Activated CD4-positive, alpha-beta memory T cell treated with anti-CD3 and anti-CD28 coated beads, Interleukin-2, amount 10 ng/mL, durations not matched to agents 7 days and 5 days (primary cell): ENCODE measurements at regions of chr20 and their contacts with region 1.

Region 1: DNA sequence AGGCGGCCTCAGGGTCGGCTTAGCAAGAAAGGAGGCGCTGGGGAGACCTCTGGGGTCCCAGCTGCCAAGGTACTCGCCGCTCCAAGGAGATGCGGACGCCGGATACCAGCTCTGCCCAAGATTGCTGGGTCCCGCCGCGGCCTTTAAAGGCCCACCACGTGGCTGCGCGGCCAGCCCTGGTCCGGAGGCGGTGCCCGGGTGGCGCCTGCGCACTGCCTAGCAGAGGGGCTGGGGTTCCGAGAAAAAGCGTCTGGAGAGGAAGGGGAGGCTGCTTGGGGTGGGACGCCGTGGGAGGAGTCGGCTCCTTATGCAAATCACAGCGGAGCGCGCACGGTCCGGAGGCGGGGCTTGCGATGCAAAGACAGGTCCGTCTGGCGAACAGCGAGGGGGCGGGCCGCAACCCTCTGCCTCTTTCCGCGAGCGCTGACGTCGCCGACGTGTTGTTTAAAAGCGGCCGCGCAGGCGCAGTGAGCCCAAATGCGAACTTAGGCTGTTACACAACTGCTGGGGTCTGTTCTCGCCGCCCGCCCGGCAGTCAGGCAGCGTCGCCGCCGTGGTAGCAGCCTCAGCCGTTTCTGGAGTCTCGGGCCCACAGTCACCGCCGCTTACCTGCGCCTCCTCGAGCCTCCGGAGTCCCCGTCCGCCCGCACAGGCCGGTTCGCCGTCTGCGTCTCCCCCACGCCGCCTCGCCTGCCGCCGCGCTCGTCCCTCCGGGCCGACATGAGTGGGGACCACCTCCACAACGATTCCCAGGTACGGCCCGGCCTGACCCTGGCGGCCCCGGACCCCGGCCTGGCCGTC is at the start of gene TOP1:
- DNase-seq: peak; percentile 100
- H3K4me3 Mint-ChIP-seq: peak within 1 kb of the TSS; percentile 88
- H3K27ac Mint-ChIP-seq: peak within 1 kb of the TSS; percentile 91
- H3K4me1 Mint-ChIP-seq: peaks cover 48% of the 10 kb centered on the region
- H3K27me3 Mint-ChIP-seq: no peaks in the 10 kb centered on the region
- total RNA-seq, gene TOP1: 67.5 to 68.0 TPM

Region 2: DNA sequence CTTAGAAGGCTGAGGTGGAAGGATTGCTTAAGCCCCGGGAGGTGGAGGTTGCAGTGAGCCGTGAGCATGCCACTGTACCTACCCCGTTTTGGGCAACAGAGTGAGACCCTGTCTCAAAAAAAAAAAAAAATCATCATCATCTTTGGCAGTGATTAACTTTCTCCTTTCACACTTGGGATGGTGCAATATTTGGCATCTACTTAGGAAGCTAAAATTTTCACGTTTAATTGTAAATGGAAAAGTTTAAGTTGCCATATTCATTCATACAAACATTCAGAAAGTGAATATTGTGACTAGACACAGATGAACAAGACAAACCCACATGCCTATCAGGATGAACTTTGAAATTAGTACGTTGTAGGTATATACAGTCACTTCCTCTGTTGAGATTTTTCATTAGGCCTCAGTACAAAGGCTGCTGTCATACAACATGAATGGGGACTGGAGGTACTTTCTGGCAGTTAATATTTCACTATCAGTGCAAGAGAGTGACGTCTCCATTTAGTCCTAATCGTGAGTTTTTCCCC is 10.4 kb after region 1 on chr20:
- CTCF ChIA-PET with region 1: interaction called, 5 read pairs
- POLR2A ChIA-PET with region 1: interaction called, 45 read pairs
- DNase-seq: no peak
- H3K4me3 Mint-ChIP-seq: no peak overlapping the region
- H3K27ac Mint-ChIP-seq: no peak overlapping the region
- H3K4me1 Mint-ChIP-seq: peaks cover 90% of the 10 kb centered on the region
- H3K27me3 Mint-ChIP-seq: no peaks in the 10 kb centered on the region

Region 3: GRCh38 chr20:41047975-41048305 is 19.4 kb after region 1 on chr20:
- CTCF ChIA-PET with region 1: no interaction called
- POLR2A ChIA-PET with region 1: interaction called, 45 read pairs
- DNase-seq: no peak
- H3K4me3 Mint-ChIP-seq: peak overlapping the region; percentile 75
- H3K27ac Mint-ChIP-seq: peak overlapping the region; percentile 95
- H3K4me1 Mint-ChIP-seq: peaks cover 85% of the 10 kb centered on the region
- H3K27me3 Mint-ChIP-seq: no peaks in the 10 kb centered on the region